ENCODE measurements at regions of chr12 and their contacts with region 1.

Region 1: GRCh38 chr12:26748741-26749431 is 84.1 kb downstream of the ITPR2 start:
- DNase-seq: no peak
- H3K4me3 Mint-ChIP-seq: peak overlapping the region; percentile 12
- H3K27ac Mint-ChIP-seq: peak overlapping the region; percentile 88
- H3K4me1 Mint-ChIP-seq: peaks cover 64% of the 10 kb centered on the region
- H3K27me3 Mint-ChIP-seq: no peaks in the 10 kb centered on the region

Region 2: DNA sequence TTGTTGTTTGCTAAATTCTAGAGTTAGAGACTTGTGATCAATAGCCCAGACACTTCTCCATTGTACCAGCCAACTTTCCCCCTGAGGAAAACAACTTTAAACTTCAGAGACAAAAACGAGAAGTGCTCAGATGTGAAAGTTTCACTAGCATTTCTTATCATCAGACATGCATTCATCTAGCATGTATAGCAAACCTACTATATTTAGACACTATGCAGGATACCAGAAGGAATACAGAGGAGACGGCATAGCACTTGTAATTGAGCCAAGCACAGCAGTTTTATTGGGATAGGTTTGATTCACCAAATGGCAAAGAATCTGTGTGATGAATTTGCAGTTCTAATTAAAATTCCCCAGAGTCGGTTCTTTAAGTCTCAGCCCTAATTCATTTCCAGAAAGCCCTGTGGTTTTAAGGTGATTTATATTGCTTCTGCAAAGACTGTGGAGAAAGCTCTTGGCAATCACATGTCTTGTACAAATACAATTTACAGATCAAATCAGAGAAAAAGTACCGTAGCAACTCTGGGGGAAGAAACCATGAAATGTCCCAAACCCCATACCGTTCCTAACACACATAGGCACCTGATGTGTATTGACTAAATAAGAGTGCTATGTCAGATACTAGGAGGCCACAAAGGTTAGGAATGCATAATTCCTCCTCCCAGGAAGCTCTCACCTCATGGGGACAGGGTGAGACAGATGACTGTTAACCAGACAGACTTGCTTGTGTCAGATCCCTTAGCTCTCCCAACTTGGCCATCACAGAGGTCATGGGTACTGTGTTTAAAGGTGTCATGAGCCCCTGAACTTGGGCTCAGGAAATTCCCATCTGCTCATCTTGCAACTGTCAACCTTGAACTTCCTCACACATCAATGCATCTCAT is 1428.5 kb before region 1 on chr12:
- CTCF ChIA-PET with region 1: no interaction called
- intact Hi-C with region 1: loop called (anchors 5 kb)
- DNase-seq: peak; percentile 51
- H3K4me3 Mint-ChIP-seq: peak overlapping the region; percentile 33
- H3K27ac Mint-ChIP-seq: peak overlapping the region; percentile 87
- H3K4me1 Mint-ChIP-seq: peaks cover 54% of the 10 kb centered on the region
- H3K27me3 Mint-ChIP-seq: no peaks in the 10 kb centered on the region

Region 3: GRCh38 chr12:26732005-26732908 is 16.6 kb before region 1 on chr12:
- CTCF ChIA-PET with region 1: interaction called, 3 read pairs
- intact Hi-C with region 1: loop called (anchors 1 kb)
- DNase-seq: no peak
- H3K4me3 Mint-ChIP-seq: no peak overlapping the region
- H3K27ac Mint-ChIP-seq: no peak overlapping the region
- H3K4me1 Mint-ChIP-seq: peaks cover 55% of the 10 kb centered on the region
- H3K27me3 Mint-ChIP-seq: no peaks in the 10 kb centered on the region

Region 4: DNA sequence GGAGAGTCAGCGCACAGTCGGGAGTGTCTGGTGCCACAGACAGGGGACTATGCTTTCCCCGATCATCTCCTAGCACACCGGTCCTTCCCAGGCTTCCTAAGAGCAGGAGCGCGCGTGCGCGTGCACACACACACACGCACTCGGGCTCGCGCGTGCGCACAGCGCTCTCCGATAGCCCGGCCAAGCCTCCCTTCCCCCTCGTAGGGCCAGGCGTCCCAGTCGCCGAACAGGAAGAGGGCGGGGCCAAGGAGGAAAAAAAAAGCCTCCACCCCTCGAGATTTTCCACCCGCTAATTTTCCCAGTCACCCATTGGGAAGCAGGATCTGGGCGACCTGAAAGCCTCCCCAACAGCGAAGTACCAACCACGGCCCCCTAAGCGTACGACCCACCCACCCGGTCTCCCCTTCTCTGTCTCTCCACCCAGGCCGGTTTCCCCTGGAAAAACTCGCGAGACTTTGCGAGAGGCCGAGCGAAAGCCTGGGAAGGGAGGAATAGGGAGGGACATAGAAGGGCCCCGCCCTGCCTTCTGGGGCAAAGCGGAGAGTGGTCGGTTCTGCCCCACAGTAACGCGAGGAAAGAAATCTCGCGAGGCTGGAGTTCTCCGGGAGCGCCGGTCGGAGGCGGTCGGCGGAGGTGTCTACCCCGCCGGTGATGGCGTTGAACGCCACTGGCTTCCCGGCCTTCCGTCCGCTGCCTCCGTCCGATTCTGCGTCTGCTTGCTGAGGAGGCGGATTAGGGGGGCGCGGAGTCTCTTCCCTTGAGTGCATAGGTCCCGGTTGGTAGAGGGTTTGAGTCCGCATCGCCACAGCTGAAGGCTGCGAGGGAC is 189.2 kb after region 1 on chr12 and contains the starts of genes FGFR1OP2 and INTS13:
- CTCF ChIA-PET with region 1: no interaction called
- intact Hi-C with region 1: loop called (anchors 1 kb)
- DNase-seq: peak; percentile 99
- H3K4me3 Mint-ChIP-seq: peak within 1 kb of the TSS; percentile 93
- H3K27ac Mint-ChIP-seq: peak within 1 kb of the TSS; percentile 98
- H3K4me1 Mint-ChIP-seq: peaks cover 52% of the 10 kb centered on the region
- H3K27me3 Mint-ChIP-seq: no peaks in the 10 kb centered on the region
- total RNA-seq, gene FGFR1OP2: 37.0 to 38.4 TPM
- total RNA-seq, gene INTS13: 39.6 to 42.0 TPM

Region 5: DNA sequence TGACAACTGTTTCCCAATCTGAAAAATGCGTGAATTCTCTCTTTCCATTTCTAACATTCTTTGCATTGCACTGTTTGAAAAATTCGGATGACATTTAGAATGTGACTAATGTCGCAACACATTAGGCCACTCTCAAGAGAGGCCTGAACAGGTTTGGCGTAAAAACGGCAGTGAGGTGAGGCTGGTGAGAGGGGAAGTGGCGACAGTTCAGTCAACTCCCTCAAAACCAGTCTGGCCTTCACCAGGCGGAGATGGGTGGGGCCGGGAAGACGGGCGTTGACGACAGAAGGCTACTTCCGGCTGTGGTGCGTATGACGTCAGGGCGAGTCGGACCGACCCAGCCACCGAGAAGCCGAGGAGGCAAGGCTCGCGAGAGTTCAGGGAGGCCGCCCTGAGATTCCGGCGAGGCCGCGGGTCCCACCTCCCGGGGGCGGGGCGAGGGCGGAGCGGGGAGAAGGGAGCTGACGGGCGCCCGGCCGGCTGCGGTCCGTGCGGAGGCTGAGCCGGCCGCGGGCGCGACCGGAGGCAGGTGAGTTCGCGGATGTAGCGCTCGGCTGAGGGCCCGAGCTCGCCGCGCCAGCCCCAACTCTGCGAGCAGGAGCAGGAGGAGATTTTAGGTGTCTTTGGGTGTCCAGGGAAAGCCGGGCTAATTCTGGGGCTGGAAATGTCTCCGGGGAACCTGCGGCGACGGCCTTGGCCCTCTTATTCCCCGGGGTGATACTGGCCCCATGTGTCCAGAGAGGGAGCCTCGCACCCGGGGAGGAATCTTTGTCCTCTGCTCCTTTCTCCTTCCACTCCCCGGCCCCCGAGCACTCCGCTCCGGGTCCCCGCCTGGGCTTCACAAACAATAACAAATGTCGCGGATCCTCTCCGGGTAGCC is 495.2 kb after region 1 on chr12 and contains the start of gene STK38L:
- CTCF ChIA-PET with region 1: no interaction called
- intact Hi-C with region 1: loop called (anchors 1 kb)
- DNase-seq: peak; percentile 98
- H3K4me3 Mint-ChIP-seq: peak within 1 kb of the TSS; percentile 98
- H3K27ac Mint-ChIP-seq: peak within 1 kb of the TSS; percentile 91
- H3K4me1 Mint-ChIP-seq: peaks cover 47% of the 10 kb centered on the region
- H3K27me3 Mint-ChIP-seq: no peaks in the 10 kb centered on the region
- total RNA-seq, gene STK38L: 21.3 to 21.4 TPM

Region 6: DNA sequence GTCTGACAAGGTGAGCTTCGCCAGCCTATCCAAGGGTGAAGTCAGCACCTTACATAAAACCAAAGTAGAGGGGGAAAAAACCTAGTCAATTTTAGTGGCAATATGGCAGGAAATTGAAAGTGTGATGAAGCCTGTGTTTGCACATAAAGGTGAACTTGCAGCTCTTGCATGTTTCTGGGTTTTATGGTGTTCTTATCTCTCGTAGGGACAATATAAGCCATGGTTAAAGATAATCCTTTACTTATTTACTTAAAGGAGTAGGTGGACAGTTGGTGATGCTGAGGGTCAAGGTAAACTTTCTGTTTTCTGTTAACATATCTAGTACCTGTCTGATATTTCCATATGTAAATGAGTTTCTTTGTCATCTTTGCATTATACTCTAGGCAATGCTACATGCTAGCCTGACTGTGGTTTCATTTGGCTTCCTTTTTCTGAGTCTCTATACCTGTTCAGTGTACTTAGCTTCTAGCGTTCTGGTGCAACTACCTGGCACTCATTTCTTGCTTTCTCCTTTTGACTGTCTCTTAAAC is 1474.2 kb after region 1 on chr12:
- CTCF ChIA-PET with region 1: no interaction called
- intact Hi-C with region 1: loop called (anchors 10 kb)
- DNase-seq: peak; percentile 52
- H3K4me3 Mint-ChIP-seq: peak overlapping the region; percentile 48
- H3K27ac Mint-ChIP-seq: peak overlapping the region; percentile 87
- H3K4me1 Mint-ChIP-seq: peaks cover 56% of the 10 kb centered on the region
- H3K27me3 Mint-ChIP-seq: no peaks in the 10 kb centered on the region